ENCODE measurements at regions of chr1 and their contacts with region 1.

Region 1: DNA sequence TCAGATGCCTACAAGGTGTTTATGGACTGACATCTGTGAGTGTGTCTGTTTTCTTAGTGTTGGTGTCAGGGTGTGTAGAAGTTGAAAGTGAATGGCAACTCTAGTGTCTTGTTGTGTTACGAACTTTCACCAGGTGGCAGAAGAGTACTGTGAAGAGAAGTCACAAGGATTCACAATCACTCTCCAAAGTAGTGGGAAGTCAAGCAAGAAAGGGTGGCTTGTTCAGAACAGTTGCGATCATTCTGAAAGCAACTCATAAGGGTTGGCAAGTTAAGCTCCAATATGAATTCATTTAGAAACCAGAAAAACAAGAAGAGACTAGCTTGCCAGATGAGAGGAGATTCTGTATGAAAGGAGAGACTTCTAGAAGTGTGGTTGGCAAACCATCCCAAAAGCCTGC is 86.1 kb downstream of the FASLG start:
- DNase-seq: peak; percentile 89
- ATAC-seq: peak; percentile 69
- H3K4me3 ChIP-seq: no peak overlapping the region
- H3K27ac ChIP-seq: no peak overlapping the region
- H3K4me1 ChIP-seq: peaks cover 7% of the 10 kb centered on the region
- H3K27me3 ChIP-seq: no peaks in the 10 kb centered on the region; the same call in 1 of the 2 replicates
- CTCF ChIP-seq: peak; percentile 85
- POLR2A ChIP-seq: peak; percentile 48; the same call in 1 of the 2 replicates
- RAD21 ChIP-seq: peak; percentile 94

Region 2: DNA sequence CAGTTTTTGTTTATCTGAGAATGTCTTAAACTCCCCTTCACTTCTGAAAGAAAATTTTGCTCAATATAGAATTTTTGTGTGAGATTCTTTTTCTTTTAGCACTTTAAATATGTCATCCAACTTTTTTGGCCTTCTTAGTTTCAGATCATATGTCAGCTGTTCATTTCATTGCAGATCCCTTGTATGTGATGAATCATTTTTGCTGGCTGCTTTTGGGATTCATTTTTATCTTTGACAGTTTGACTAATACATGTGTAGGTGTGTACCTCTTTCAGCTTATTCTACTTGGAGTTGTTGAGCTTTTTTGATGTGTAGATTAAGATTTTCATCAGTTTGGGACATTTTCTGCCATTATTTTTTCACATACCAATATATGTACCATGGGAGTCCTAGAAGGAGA is 70.7 kb after region 1 on chr1:
- CTCF ChIA-PET with region 1: no interaction called
- POLR2A ChIA-PET with region 1: no interaction called
- dilution Hi-C with region 1: no loop called
- in situ Hi-C with region 1: no loop called
- intact Hi-C with region 1: loop called (anchors 1 kb)
- DNase-seq: peak; percentile 6
- ATAC-seq: no peak
- H3K4me3 ChIP-seq: no peak overlapping the region
- H3K27ac ChIP-seq: no peak overlapping the region
- H3K4me1 ChIP-seq: peaks cover 4% of the 10 kb centered on the region; the same call in 1 of the 2 replicates
- H3K27me3 ChIP-seq: no peaks in the 10 kb centered on the region
- CTCF ChIP-seq: no peak
- POLR2A ChIP-seq: no peak
- RAD21 ChIP-seq: no peak

Region 3: DNA sequence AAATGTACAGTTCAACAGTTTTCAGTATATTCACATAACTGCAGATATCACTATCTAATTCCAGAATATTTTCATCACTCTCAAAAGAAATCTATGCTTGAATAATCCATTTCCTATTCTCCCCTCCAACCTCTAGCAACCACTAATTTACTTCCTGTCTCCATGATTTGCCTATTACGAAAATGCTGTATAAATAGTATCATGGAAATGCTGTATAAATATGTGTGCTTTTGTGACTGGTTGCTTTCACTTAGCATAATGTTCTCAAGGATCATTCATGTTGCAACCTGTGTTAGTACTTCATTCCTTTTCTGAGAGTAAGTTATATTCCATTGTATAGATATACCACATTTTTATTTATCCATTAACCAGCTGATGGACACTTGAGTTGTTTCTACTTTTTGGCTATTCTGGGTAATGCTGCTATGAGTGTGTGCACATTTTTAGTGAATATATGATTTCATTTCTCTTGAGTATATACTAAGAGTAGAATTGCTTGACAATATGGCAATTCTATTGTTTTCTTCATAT is 190.1 kb after region 1 on chr1:
- CTCF ChIA-PET with region 1: no interaction called
- POLR2A ChIA-PET with region 1: no interaction called
- dilution Hi-C with region 1: no loop called
- in situ Hi-C with region 1: no loop called
- intact Hi-C with region 1: loop called (anchors 5 kb)
- DNase-seq: peak; percentile 56
- ATAC-seq: no peak
- H3K4me3 ChIP-seq: no peak overlapping the region
- H3K27ac ChIP-seq: peak overlapping the region; percentile 32; the same call in 1 of the 2 replicates
- H3K4me1 ChIP-seq: peaks cover 25% of the 10 kb centered on the region
- H3K27me3 ChIP-seq: no peaks in the 10 kb centered on the region
- CTCF ChIP-seq: no peak
- POLR2A ChIP-seq: no peak
- RAD21 ChIP-seq: no peak

Region 4: GRCh38 chr1:173195596-173196088 is 450.6 kb after region 1 on chr1:
- CTCF ChIA-PET with region 1: interaction called, 12 read pairs
- POLR2A ChIA-PET with region 1: no interaction called
- dilution Hi-C with region 1: no loop called
- in situ Hi-C with region 1: loop called (anchors 5 kb)
- intact Hi-C with region 1: no loop called
- DNase-seq: no peak
- ATAC-seq: no peak
- H3K4me3 ChIP-seq: no peak overlapping the region
- H3K27ac ChIP-seq: no peak overlapping the region
- H3K4me1 ChIP-seq: peaks cover 3% of the 10 kb centered on the region
- H3K27me3 ChIP-seq: no peaks in the 10 kb centered on the region
- CTCF ChIP-seq: no peak
- POLR2A ChIP-seq: no peak
- RAD21 ChIP-seq: no peak

Region 5: GRCh38 chr1:173476664-173477285 is 731.8 kb after region 1 on chr1:
- CTCF ChIA-PET with region 1: no interaction called
- POLR2A ChIA-PET with region 1: no interaction called
- dilution Hi-C with region 1: no loop called
- in situ Hi-C with region 1: no loop called
- intact Hi-C with region 1: loop called (anchors 2 kb)
- DNase-seq: peak; percentile 78
- ATAC-seq: peak; percentile 82
- H3K4me3 ChIP-seq: peak overlapping the region; percentile 95
- H3K27ac ChIP-seq: peak overlapping the region; percentile 79
- H3K4me1 ChIP-seq: peaks cover 16% of the 10 kb centered on the region
- H3K27me3 ChIP-seq: no peaks in the 10 kb centered on the region
- CTCF ChIP-seq: no peak
- POLR2A ChIP-seq: peak; percentile 37; the same call in 1 of the 2 replicates
- RAD21 ChIP-seq: no peak

Region 6: GRCh38 chr1:173867753-173868265 is 1122.8 kb after region 1 on chr1 and contains the start of gene GAS5:
- CTCF ChIA-PET with region 1: no interaction called
- POLR2A ChIA-PET with region 1: interaction called, 3 read pairs
- dilution Hi-C with region 1: no loop called
- in situ Hi-C with region 1: no loop called
- intact Hi-C with region 1: loop called (anchors 5 kb)
- DNase-seq: peak; percentile 100
- ATAC-seq: peak; percentile 92
- H3K4me3 ChIP-seq: peak within 1 kb of the TSS; percentile 70
- H3K27ac ChIP-seq: peak within 1 kb of the TSS; percentile 80
- H3K4me1 ChIP-seq: no peaks in the 10 kb centered on the region; the same call in 1 of the 2 replicates
- H3K27me3 ChIP-seq: no peaks in the 10 kb centered on the region
- CTCF ChIP-seq: no peak
- POLR2A ChIP-seq: peak; percentile 100
- RAD21 ChIP-seq: no peak
- total RNA-seq, gene GAS5: 380 and 450 TPM in 2 replicates

Region 7: GRCh38 chr1:174217787-174218574 is 1473.0 kb after region 1 on chr1:
- CTCF ChIA-PET with region 1: no interaction called
- POLR2A ChIA-PET with region 1: no interaction called
- dilution Hi-C with region 1: no loop called
- in situ Hi-C with region 1: loop called (anchors 25 kb)
- intact Hi-C with region 1: loop called (anchors 10 kb)
- DNase-seq: peak; percentile 54
- ATAC-seq: peak; percentile 85
- H3K4me3 ChIP-seq: no peak overlapping the region
- H3K27ac ChIP-seq: no peak overlapping the region
- H3K4me1 ChIP-seq: no peaks in the 10 kb centered on the region
- H3K27me3 ChIP-seq: no peaks in the 10 kb centered on the region
- CTCF ChIP-seq: peak; percentile 77
- POLR2A ChIP-seq: no peak
- RAD21 ChIP-seq: peak; percentile 84

Measured in IMR-90 (cell line).